ENCODE measurements at regions of chr21 and their contacts with region 1.

Region 1: DNA sequence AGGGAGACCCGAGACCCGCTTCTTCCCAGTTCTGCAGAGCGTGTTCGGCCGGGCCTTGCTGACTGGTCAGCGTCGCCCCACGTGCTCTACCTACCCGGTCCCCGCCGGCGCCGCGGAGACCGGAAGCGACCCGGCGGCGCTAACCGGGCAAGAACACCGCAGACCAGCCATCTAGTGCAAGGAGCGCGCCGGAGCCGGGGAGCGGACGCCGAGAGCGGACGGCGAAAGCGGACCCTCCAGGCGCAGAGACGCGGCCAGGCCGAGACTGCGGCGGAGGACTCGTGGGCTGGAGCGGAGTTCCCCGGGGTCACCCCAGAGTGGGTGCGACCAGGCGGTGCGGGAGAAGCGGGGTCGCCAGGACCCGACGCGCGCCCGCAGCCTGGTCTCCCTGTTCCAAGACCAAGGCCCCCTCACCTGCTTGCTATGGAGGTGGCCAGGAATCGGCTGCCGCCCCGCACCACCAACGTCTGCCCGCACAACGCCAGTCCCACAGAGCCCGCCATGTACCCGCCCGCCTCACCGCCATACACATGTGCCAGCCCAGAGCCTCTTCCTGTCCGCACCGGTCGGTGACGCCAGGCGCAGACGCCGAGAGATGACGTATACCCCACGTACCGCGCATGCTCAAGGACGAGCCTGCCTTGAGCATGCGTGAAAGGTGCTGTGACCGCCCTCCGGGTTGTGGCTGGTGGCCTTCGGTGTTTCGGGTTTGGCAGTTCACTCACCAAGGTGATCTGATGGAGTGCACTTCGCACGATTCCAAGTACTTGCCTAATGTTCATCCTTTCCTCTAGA is at the start of gene WDR4:
- DNase-seq: peak; percentile 98 to 100 (median 98)
- ATAC-seq: peak; percentile 90
- H3K4me3 ChIP-seq: peak within 1 kb of the TSS; percentile 74
- H3K4me3 Mint-ChIP-seq: peak within 1 kb of the TSS; percentile 99
- H3K27ac ChIP-seq: peak within 1 kb of the TSS; percentile 80 to 93
- H3K27ac Mint-ChIP-seq: peak within 1 kb of the TSS; percentile 95
- H3K4me1 ChIP-seq: peaks cover 25% of the 10 kb centered on the region
- H3K4me1 Mint-ChIP-seq: peaks cover 33% of the 10 kb centered on the region
- H3K27me3 ChIP-seq: no peaks in the 10 kb centered on the region
- H3K27me3 Mint-ChIP-seq: no peaks in the 10 kb centered on the region
- CTCF ChIP-seq: no peak
- total RNA-seq, gene WDR4: 11.3 to 12.9 TPM

Region 2: DNA sequence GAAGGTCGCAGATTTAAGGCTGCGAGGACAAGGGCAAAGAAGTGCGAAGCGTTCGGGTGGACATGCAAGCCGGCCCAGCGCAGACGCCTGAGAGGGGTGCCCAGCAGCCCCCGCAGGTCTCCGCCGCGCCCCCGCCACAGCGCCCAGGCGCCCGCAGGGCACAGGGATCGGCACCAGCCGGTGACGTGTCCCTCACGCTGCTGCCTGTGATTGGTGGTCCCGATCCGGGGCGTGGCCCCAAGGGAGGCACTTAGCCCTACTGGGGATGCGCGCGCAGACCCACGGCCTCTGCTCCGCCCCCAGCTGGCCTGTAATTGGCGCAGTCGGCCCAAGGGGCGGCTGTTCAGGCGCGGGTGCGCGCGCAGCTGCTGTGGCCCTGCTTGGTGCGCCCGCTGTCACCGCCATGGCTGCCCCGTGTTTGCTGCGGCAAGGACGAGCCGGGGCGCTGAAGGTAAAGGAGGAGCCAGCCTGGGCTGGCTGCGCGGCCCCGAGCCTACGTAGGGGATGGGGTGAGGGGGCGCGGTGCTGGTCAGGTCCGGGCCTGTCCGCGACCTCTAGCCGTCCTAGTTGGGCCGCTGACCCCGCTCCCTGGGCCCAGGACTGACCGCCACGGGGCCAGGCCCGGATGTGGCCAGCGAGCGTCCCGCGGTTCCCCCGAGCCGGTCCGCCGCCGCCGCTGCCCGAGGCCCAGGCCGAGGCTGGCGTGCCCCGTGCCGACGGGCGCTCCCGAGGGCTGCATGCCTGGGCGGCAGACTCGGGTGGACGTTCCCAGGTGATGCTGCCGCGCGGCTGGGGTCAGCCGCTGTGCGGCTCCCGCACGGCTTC is 14.0 kb after region 1 on chr21 and contains the start of gene NDUFV3:
- CTCF ChIA-PET with region 1: interaction called, 8 read pairs
- POLR2A ChIA-PET with region 1: interaction called, 39 read pairs
- intact Hi-C with region 1: loop called (anchors 1 kb)
- DNase-seq: peak; percentile 100
- ATAC-seq: peak; percentile 93
- H3K4me3 ChIP-seq: peak within 1 kb of the TSS; percentile 76
- H3K4me3 Mint-ChIP-seq: peak within 1 kb of the TSS; percentile 91
- H3K27ac ChIP-seq: peak within 1 kb of the TSS; percentile 86
- H3K27ac Mint-ChIP-seq: peak within 1 kb of the TSS; percentile 97
- H3K4me1 ChIP-seq: peaks cover 12% of the 10 kb centered on the region
- H3K4me1 Mint-ChIP-seq: peaks cover 19% of the 10 kb centered on the region
- H3K27me3 ChIP-seq: no peaks in the 10 kb centered on the region
- H3K27me3 Mint-ChIP-seq: no peaks in the 10 kb centered on the region
- CTCF ChIP-seq: no peak
- total RNA-seq, gene NDUFV3: 15.3 to 15.8 TPM

Measured in CD4-positive, alpha-beta T cell (primary cell).